Activated B cell treated with CpG ODN at 0.5 μM for 24 hours (primary cell): ENCODE measurements at regions of chr3 and their contacts with region 1.

Region 1: GRCh38 chr3:113660896-113661295 is 35.5 kb downstream of the USF3 start:
- DNase-seq: no peak
- ATAC-seq: peak; percentile 44
- H3K4me3 Mint-ChIP-seq: peak overlapping the region; percentile 68
- H3K27ac Mint-ChIP-seq: peak overlapping the region; percentile 94
- H3K4me1 Mint-ChIP-seq: peaks cover 84% of the 10 kb centered on the region
- H3K27me3 Mint-ChIP-seq: no peaks in the 10 kb centered on the region
- CTCF ChIP-seq: no peak

Region 2: DNA sequence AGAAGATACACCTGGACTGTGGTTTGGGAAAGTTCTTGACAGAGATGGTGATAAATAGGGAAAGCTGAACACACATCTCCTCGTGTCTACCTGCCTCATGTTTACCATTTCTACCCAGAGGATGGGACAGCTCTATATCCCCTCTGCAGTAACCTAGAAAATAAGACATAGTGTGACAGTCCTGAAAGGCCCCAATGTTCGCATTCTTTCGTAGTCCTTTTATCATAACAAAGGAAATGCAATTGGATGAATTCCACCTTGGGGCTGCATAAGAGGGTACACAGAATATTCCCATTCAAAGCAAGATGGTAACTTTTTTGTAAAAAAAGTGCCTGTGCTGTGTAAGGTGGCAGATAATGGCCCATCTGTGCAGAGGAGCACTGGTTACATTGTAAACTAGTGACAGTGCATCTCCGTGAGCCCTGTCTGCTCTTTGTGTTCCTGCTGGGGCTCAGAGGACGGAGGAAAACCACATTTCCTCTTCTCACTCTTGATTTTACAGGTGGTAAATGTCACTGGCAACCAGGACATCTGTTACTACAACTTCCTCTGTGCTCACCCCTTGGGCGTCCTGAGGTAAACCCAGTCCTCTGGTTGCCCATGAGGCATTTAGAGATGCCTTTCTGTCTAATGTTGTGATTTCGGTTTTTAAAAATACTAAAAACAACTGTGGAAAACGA is 54.2 kb before region 1 on chr3:
- CTCF ChIA-PET with region 1: no interaction called
- POLR2A ChIA-PET with region 1: no interaction called
- intact Hi-C with region 1: loop called (anchors 2 kb)
- DNase-seq: peak; percentile 26
- ATAC-seq: peak; percentile 96
- H3K4me3 Mint-ChIP-seq: peak overlapping the region; percentile 52
- H3K27ac Mint-ChIP-seq: peak overlapping the region; percentile 72
- H3K4me1 Mint-ChIP-seq: peaks cover 25% of the 10 kb centered on the region
- H3K27me3 Mint-ChIP-seq: no peaks in the 10 kb centered on the region
- CTCF ChIP-seq: no peak

Region 3: DNA sequence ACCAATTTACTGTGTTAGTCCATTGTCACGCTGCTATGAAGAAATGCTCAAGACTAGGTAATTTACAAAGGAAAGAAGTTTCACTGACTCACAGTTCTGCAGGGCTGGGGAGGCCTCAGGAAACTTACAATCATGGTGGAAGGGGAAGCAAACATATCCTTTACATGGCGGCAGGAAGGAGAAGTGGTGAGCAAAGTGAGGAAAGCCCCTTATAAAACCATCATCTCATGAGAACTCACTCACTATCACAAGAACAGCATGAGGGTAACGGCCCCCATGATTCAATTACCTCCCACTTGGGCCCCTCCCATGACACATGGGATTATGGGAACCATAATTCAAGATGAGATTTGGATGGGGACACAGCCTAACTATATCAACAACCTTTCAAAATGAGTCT is 15.4 kb after region 1 on chr3:
- CTCF ChIA-PET with region 1: no interaction called
- POLR2A ChIA-PET with region 1: no interaction called
- intact Hi-C with region 1: loop called (anchors 2 kb)
- DNase-seq: no peak
- ATAC-seq: peak; percentile 67
- H3K4me3 Mint-ChIP-seq: peak overlapping the region; percentile 29
- H3K27ac Mint-ChIP-seq: peak overlapping the region; percentile 89
- H3K4me1 Mint-ChIP-seq: peaks cover 37% of the 10 kb centered on the region
- H3K27me3 Mint-ChIP-seq: no peaks in the 10 kb centered on the region
- CTCF ChIP-seq: no peak

Region 4: DNA sequence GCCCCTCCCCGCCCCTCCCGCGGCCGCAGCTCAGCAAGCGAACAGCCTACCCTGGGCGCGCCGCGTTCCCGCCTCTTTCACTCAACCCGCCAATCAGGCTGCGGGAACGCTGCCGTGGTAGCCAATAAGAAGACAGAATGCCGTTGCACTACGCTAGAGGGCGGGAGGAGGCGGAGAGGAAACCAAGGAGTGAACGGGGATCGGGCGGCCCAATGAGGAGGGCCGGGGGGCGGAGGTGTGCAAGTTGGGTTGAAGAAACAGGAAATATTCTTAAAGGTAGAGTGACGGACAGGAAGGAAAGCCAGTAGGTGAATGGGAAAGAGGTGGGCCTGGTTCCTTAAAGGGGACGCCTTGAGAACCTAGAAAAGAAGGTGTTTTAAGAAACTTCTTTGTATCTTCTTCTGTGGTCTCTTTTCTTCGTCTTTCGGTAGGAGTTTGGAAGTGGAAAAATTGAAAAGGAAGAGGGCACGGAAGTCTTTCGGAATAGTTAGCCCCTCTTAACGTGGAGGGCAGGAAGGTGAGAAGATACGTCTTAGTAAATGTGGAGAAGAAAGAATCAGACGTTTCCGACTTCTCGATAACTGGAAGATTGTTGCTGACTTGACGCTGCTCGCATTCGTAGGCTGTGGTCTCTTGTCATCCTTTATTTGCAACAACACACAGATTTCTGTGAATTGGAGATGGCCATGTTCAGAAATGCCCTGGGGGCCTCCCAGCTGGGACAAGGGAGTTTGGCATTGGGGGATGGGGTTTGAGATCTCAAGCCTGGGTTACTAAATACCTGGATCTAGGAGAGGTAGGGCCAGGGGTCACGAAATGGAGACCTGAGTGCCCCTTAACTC is 36.0 kb after region 1 on chr3:
- CTCF ChIA-PET with region 1: interaction called, 4 read pairs
- POLR2A ChIA-PET with region 1: interaction called, 57 read pairs
- intact Hi-C with region 1: loop called (anchors 2 kb)
- DNase-seq: peak; percentile 95
- ATAC-seq: peak; percentile 89
- H3K4me3 Mint-ChIP-seq: no peak overlapping the region
- H3K27ac Mint-ChIP-seq: no peak overlapping the region
- H3K4me1 Mint-ChIP-seq: peaks cover 29% of the 10 kb centered on the region
- H3K27me3 Mint-ChIP-seq: no peaks in the 10 kb centered on the region
- CTCF ChIP-seq: no peak